Activated naive CD4-positive, alpha-beta T cell treated with anti-CD3 and anti-CD28 coated beads for 36 hours (primary cell): ENCODE measurements at regions of chr19 and their contacts with region 1.

Region 1: GRCh38 chr19:10717356-10718204 is at the start of gene DNM2:
- DNase-seq: peak; percentile 99
- H3K4me3 Mint-ChIP-seq: peak within 1 kb of the TSS; percentile 96
- H3K27ac Mint-ChIP-seq: peak within 1 kb of the TSS; percentile 84
- H3K4me1 Mint-ChIP-seq: peaks cover 31% of the 10 kb centered on the region
- H3K27me3 Mint-ChIP-seq: no peaks in the 10 kb centered on the region
- total RNA-seq, gene DNM2: 144 to 148 TPM

Region 2: GRCh38 chr19:10315335-10316214 is 402.0 kb before region 1 on chr19 and contains the start of gene FDX2:
- CTCF ChIA-PET with region 1: no interaction called
- intact Hi-C with region 1: no loop called
- DNase-seq: peak; percentile 94
- H3K4me3 Mint-ChIP-seq: peak within 1 kb of the TSS; percentile 89
- H3K27ac Mint-ChIP-seq: peak within 1 kb of the TSS; percentile 83
- H3K4me1 Mint-ChIP-seq: peaks cover 18% of the 10 kb centered on the region
- H3K27me3 Mint-ChIP-seq: no peaks in the 10 kb centered on the region
- total RNA-seq, gene FDX2: 9.5 to 9.7 TPM

Region 3: GRCh38 chr19:10380313-10381102 is 337.1 kb before region 1 on chr19 and contains the start of gene TYK2:
- CTCF ChIA-PET with region 1: no interaction called
- intact Hi-C with region 1: no loop called
- DNase-seq: peak; percentile 97
- H3K4me3 Mint-ChIP-seq: peak within 1 kb of the TSS; percentile 87
- H3K27ac Mint-ChIP-seq: peak within 1 kb of the TSS; percentile 91
- H3K4me1 Mint-ChIP-seq: peaks cover 19% of the 10 kb centered on the region
- H3K27me3 Mint-ChIP-seq: no peaks in the 10 kb centered on the region
- total RNA-seq, gene TYK2: 175 to 190 TPM

Region 4: GRCh38 chr19:10653715-10654492 is 63.7 kb before region 1 on chr19 and contains the start of gene ILF3:
- CTCF ChIA-PET with region 1: no interaction called
- intact Hi-C with region 1: loop called (anchors 1 kb)
- DNase-seq: peak; percentile 100
- H3K4me3 Mint-ChIP-seq: peak within 1 kb of the TSS; percentile 93
- H3K27ac Mint-ChIP-seq: peak within 1 kb of the TSS; percentile 97
- H3K4me1 Mint-ChIP-seq: peaks cover 39% of the 10 kb centered on the region
- H3K27me3 Mint-ChIP-seq: no peaks in the 10 kb centered on the region
- total RNA-seq, gene ILF3: 399 to 408 TPM

Region 5: DNA sequence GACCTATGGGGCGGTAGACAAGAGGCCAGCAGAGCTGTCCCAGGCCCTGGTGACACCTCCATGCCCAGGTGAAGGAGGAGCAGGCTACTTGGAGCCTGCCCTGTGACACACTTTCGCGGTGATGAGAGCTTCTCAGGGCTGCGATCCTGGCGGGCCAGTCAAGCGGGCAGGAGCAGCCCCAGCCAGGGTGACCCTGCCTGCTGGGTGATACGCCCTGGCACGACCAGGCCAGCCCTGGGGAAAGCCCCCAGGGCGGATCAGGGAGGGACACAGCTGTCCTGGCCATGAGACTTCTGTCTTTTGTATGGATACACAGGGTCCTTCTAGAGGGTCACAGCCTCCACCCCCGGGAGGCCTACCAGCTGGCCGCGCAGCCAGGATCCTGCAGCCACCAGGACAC is 13.3 kb after region 1 on chr19:
- CTCF ChIA-PET with region 1: interaction called, 7 read pairs
- intact Hi-C with region 1: loop called (anchors 1 kb)
- DNase-seq: no peak
- H3K4me3 Mint-ChIP-seq: peak overlapping the region; percentile 52
- H3K27ac Mint-ChIP-seq: peak overlapping the region; percentile 84
- H3K4me1 Mint-ChIP-seq: peaks cover 51% of the 10 kb centered on the region
- H3K27me3 Mint-ChIP-seq: no peaks in the 10 kb centered on the region

Region 6: DNA sequence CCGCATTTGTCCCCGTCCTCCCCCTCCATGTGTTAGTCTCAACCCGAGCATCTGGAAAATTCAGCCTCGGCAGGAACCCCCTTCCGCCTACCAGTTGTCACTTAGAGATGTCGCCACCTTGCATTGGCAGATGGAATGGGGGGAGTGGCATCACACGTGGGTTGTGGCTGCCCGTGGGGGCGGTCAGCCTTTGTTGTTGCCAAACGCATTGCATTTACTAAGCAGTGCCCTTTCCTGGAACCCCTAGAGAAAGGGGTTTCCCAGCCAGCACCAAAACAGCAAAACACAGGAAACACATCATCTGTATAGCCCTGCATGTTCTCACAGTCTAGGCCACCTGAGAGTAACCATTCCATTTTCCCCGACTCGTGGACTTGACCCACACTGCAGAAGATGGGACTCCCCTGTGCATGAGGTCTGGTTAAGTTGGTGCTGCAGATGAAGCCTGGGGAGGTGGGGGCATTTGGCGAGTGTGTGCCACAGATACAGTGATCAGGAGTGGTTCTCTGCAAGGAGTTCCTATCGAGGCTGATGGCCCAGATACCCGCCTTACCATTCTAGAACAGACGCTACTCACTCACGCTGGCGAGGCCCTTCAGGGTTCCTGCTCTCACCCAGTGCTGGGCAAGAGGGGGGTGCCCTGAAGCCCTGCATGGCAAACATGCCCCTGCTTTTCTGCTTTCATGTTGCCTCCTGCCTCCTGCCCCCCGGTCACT is 80.1 kb after region 1 on chr19:
- CTCF ChIA-PET with region 1: interaction called, 3 read pairs
- intact Hi-C with region 1: loop called (anchors 1 kb)
- DNase-seq: peak; percentile 96
- H3K4me3 Mint-ChIP-seq: peak overlapping the region; percentile 70
- H3K27ac Mint-ChIP-seq: peak overlapping the region; percentile 96
- H3K4me1 Mint-ChIP-seq: peaks cover 28% of the 10 kb centered on the region
- H3K27me3 Mint-ChIP-seq: no peaks in the 10 kb centered on the region

Region 7: DNA sequence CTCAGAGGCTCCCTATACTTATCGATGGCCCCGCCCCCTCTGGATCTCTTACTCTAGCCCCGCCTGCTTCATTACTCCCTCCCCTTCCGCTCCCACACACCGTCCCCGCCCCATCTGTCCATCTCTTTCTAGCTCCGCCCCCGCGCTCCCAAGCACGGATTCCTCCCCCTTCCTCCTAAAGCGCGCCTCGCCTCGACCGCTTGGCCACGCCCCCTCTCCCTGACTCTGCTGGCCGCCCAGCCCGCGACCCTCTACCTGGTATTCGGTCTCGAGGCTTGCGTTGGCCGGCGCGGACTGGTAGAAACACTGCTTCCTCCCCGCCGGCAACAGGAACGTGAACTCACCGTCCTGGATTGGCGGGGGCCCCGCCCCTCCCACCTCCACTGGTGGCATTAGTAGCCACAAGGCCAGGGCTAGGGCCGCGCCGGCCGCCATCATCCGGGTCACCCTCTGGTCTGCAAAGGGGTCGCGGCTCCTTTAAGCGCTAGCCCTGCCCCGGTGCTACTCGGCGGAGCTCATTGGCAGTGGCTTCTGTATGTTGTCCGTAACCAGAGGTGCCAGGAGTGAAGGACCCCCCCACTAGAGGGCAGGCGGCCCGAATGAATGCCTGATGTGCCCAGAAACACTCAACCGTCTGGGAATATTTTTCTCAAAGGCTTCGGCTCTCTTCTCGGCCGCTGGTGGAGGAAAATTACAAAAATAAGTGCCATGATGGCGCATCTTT is 118.3 kb after region 1 on chr19 and contains the start of gene TMED1:
- CTCF ChIA-PET with region 1: interaction called, 13 read pairs
- intact Hi-C with region 1: loop called (anchors 1 kb)
- DNase-seq: peak; percentile 98
- H3K4me3 Mint-ChIP-seq: peak within 1 kb of the TSS; percentile 94
- H3K27ac Mint-ChIP-seq: peak within 1 kb of the TSS; percentile 97
- H3K4me1 Mint-ChIP-seq: peaks cover 14% of the 10 kb centered on the region
- H3K27me3 Mint-ChIP-seq: no peaks in the 10 kb centered on the region
- total RNA-seq, gene TMED1: 15.3 to 16.7 TPM

Region 8: GRCh38 chr19:10870955-10871603 is 153.5 kb after region 1 on chr19 and contains the start of gene CARM1:
- CTCF ChIA-PET with region 1: interaction called, 99 read pairs
- intact Hi-C with region 1: loop called (anchors 1 kb)
- DNase-seq: peak; percentile 99
- H3K4me3 Mint-ChIP-seq: peak within 1 kb of the TSS; percentile 85
- H3K27ac Mint-ChIP-seq: peak within 1 kb of the TSS; percentile 93
- H3K4me1 Mint-ChIP-seq: peaks cover 31% of the 10 kb centered on the region
- H3K27me3 Mint-ChIP-seq: no peaks in the 10 kb centered on the region
- total RNA-seq, gene CARM1: 88.4 to 89.3 TPM